Activated naive CD4-positive, alpha-beta T cell treated with anti-CD3 and anti-CD28 coated beads for 36 hours (primary cell): ENCODE measurements at regions of chr4 and their contacts with region 1.

Region 1: GRCh38 chr4:119212234-119212963 is at the start of gene USP53:
- DNase-seq: peak; percentile 98
- H3K4me3 Mint-ChIP-seq: peak within 1 kb of the TSS; percentile 90
- H3K27ac Mint-ChIP-seq: peak within 1 kb of the TSS; percentile 92
- H3K4me1 Mint-ChIP-seq: peaks cover 33% of the 10 kb centered on the region
- H3K27me3 Mint-ChIP-seq: no peaks in the 10 kb centered on the region
- total RNA-seq, gene USP53: 8.6 to 9.3 TPM

Region 2: DNA sequence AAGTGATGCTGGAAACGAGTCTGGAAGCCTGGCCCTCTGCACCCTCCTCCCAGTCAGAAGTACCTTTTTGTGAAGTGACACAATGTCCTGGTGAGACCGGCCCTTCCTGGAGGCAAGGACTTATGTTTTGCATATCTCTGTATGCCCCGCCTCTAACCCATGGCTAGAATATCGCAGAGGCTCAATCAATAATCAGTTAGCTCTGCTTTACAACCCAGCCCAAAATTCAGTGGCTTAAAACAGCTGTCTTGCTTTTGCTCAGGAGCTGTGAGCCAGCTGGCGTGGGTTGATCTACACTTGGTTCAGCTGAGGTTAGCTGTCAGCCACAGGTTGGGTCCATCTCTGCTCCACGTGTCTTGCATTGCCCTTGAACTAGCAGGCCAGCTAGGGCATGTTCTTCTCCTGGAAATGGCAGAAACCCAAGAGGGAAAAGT is 626.0 kb before region 1 on chr4:
- CTCF ChIA-PET with region 1: no interaction called
- intact Hi-C with region 1: loop called (anchors 10 kb)
- DNase-seq: no peak
- H3K4me3 Mint-ChIP-seq: no peak overlapping the region
- H3K27ac Mint-ChIP-seq: no peak overlapping the region
- H3K4me1 Mint-ChIP-seq: peaks cover 16% of the 10 kb centered on the region
- H3K27me3 Mint-ChIP-seq: peaks cover 23% of the 10 kb centered on the region

Region 3: GRCh38 chr4:118964891-118965411 is 247.4 kb before region 1 on chr4:
- CTCF ChIA-PET with region 1: no interaction called
- intact Hi-C with region 1: no loop called
- DNase-seq: no peak
- H3K4me3 Mint-ChIP-seq: no peak overlapping the region
- H3K27ac Mint-ChIP-seq: no peak overlapping the region
- H3K4me1 Mint-ChIP-seq: peaks cover 7% of the 10 kb centered on the region
- H3K27me3 Mint-ChIP-seq: no peaks in the 10 kb centered on the region

Region 4: DNA sequence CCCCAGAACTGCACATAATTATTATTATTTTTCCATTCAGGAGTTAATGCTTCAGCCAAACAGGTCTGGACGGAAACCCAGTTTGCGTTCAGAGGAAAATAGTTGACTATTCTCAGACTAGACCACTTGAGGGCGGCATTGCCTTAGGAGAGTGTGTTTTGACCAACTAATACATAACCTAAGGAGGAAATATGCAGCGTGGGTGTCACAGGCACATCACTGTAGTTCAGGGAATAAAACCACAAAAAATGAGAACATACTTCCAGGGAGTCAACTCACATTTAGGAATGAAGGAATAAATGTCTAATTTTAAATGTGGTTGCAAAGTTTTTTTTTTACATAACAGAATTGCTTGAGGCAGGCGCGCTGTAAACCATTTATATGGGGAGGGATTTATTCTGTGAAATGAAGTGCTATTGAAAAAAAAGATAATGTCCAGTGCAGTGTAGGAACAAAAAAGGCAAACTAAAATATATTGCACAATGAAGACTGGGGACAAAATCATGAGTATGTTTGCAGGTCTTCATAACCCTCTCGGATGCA is 230.5 kb before region 1 on chr4:
- CTCF ChIA-PET with region 1: no interaction called
- intact Hi-C with region 1: loop called (anchors 2 kb)
- DNase-seq: peak; percentile 74
- H3K4me3 Mint-ChIP-seq: no peak overlapping the region
- H3K27ac Mint-ChIP-seq: no peak overlapping the region
- H3K4me1 Mint-ChIP-seq: no peaks in the 10 kb centered on the region
- H3K27me3 Mint-ChIP-seq: no peaks in the 10 kb centered on the region

Region 5: GRCh38 chr4:119227690-119228089 is 15.3 kb after region 1 on chr4:
- CTCF ChIA-PET with region 1: interaction called, 3 read pairs
- intact Hi-C with region 1: loop called (anchors 1 kb)
- DNase-seq: no peak
- H3K4me3 Mint-ChIP-seq: no peak overlapping the region
- H3K27ac Mint-ChIP-seq: no peak overlapping the region
- H3K4me1 Mint-ChIP-seq: peaks cover 26% of the 10 kb centered on the region
- H3K27me3 Mint-ChIP-seq: no peaks in the 10 kb centered on the region

Region 6: GRCh38 chr4:119286377-119287002 is 74.1 kb after region 1 on chr4:
- CTCF ChIA-PET with region 1: interaction called, 6 read pairs
- intact Hi-C with region 1: loop called (anchors 1 kb)
- DNase-seq: peak; percentile 52
- H3K4me3 Mint-ChIP-seq: no peak overlapping the region
- H3K27ac Mint-ChIP-seq: no peak overlapping the region
- H3K4me1 Mint-ChIP-seq: peaks cover 11% of the 10 kb centered on the region
- H3K27me3 Mint-ChIP-seq: no peaks in the 10 kb centered on the region

Region 7: DNA sequence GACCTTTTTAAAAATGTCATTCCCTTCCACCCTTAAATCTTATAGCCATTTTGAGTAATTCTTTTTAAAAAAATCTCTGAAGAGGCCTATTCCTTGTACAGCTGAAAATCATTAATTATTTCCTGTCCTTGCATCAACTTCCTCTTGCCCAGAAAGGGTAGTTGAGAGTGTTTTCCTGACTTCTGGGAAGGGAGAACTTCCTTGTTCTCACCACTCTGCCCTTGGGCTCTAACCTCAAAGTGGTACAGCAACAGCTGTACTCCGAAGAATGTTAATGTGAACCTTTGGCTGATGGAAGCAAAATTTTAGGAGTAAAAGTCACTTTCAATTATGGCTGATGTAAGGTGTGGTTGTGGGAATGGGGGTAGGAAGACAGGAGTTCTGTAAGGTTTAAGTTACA is 124.6 kb after region 1 on chr4:
- CTCF ChIA-PET with region 1: no interaction called
- intact Hi-C with region 1: no loop called
- DNase-seq: no peak
- H3K4me3 Mint-ChIP-seq: no peak overlapping the region
- H3K27ac Mint-ChIP-seq: no peak overlapping the region
- H3K4me1 Mint-ChIP-seq: peaks cover 2% of the 10 kb centered on the region
- H3K27me3 Mint-ChIP-seq: no peaks in the 10 kb centered on the region